GM12878 (cell line): ENCODE measurements at regions of chr1 and their contacts with region 1.

Region 1: DNA sequence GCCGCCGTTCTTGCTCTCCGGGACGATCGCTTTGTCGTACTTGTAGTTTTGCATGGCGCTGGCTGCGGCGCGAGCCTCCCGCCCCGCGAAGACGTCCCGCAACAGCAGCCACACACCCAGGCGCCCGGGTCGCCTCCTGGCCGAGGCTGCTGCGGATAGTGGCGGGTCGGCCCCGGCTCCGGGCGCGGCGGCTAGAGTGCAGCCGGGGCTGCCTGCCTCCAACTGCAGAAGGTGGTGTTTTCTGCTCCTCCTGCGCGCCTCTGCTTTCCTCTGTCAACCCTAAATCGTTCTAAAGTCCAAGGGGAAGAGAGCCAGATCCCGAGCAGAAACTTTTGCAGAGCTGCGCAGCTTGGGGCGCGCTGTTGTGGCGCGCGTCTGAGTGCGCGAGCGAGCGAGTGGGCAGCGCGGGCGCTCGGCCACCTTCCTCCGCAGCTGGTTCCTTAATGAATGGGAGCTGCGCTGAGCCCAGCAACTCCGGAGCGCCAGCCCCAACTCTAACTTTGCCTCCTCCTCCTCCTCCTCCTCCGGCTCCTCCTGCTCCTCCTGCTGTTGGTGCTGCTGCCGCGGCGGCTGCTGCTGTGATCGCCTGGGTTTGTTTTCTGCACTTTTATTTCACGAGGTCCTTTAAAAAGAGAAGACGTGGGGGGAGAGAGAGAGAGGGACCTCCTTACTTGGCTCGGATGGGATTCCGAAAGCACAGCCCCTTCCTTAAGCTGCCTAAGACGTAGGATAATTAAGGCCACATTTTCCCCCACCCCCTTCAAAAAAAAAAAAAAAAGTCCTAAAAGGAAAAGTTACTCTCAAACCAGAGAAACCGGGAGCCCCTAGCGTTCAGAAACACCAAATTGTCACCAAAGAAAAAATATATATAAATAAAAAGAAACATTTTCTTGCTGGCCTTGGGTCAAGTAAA is at the start of gene PLPP3:
- DNase-seq: no peak
- ATAC-seq: peak; percentile 59
- H3K4me3 ChIP-seq: peak within 1 kb of the TSS; percentile 72
- H3K27ac ChIP-seq: no peak within 1 kb of the TSS
- H3K4me1 ChIP-seq: no peaks in the 10 kb centered on the region
- H3K27me3 ChIP-seq: peaks cover 0 to 11% of the 10 kb centered on the region in 2 experiments; a peak in 2 of 4 replicates
- CTCF ChIP-seq: peak in 2 of 3 experiments; percentile 27 to 32; a peak in 4 of 6 replicates
- EP300 ChIP-seq: no peak
- POLR2A ChIP-seq: no peak
- RAD21 ChIP-seq: peak; percentile 53
- polyA plus RNA-seq, gene PLPP3: 7.4 to 8.0 TPM

Region 2: GRCh38 chr1:55284852-55285251 is 1294.4 kb before region 1 on chr1:
- CTCF ChIA-PET with region 1: interaction called, 96 read pairs
- POLR2A ChIA-PET with region 1: interaction called, 3 read pairs
- RAD21 ChIA-PET with region 1: interaction called, 43 read pairs
- SMC1A ChIA-PET with region 1: interaction called, 59 read pairs
- in situ Hi-C with region 1: loop called (anchors 5 kb)
- intact Hi-C with region 1: no loop called
- DNase-seq: peak; percentile 5
- ATAC-seq: no peak
- H3K4me3 ChIP-seq: no peak overlapping the region
- H3K27ac ChIP-seq: no peak overlapping the region
- H3K4me1 ChIP-seq: peaks cover 18% of the 10 kb centered on the region
- H3K27me3 ChIP-seq: no peaks in the 10 kb centered on the region; a peak in 1 of 4 replicates
- CTCF ChIP-seq: peak; percentile 43 to 53 (median 49); a peak in 5 of 6 replicates
- EP300 ChIP-seq: no peak
- POLR2A ChIP-seq: no peak
- RAD21 ChIP-seq: peak; percentile 81

Region 3: DNA sequence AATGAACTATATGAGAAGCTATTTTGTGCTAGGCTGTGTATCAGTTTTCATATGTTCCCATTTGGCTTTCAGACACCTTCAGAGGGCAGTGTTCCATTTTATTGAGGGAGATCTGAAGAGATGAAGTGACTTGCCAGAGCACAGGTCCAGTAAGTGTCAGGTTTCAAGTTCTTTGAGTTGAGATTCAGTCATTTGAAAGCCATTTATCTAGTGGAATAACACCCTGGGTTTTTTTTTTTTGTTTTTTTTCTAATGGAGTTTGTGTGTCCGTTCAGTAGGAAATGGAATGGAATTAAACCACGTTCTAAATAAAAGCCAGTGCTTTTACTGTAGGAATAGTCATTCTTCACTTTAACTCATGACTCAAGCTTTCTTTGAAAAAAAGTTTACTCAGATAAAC is 711.2 kb before region 1 on chr1:
- CTCF ChIA-PET with region 1: interaction called, 67 read pairs
- POLR2A ChIA-PET with region 1: no interaction called
- RAD21 ChIA-PET with region 1: interaction called, 29 read pairs
- SMC1A ChIA-PET with region 1: interaction called, 57 read pairs
- in situ Hi-C with region 1: loop called (anchors 10 kb)
- intact Hi-C with region 1: no loop called
- DNase-seq: no peak
- ATAC-seq: no peak
- H3K4me3 ChIP-seq: no peak overlapping the region
- H3K27ac ChIP-seq: no peak overlapping the region
- H3K4me1 ChIP-seq: no peaks in the 10 kb centered on the region
- H3K27me3 ChIP-seq: no peaks in the 10 kb centered on the region; a peak in 1 of 4 replicates
- CTCF ChIP-seq: no peak; a peak in 1 of 6 replicates
- EP300 ChIP-seq: no peak
- POLR2A ChIP-seq: no peak
- RAD21 ChIP-seq: no peak

Region 4: GRCh38 chr1:56330391-56331026 is 248.7 kb before region 1 on chr1:
- CTCF ChIA-PET with region 1: interaction called, 39 read pairs
- POLR2A ChIA-PET with region 1: interaction called, 44 read pairs
- RAD21 ChIA-PET with region 1: interaction called, 167 read pairs
- SMC1A ChIA-PET with region 1: interaction called, 114 read pairs
- in situ Hi-C with region 1: loop called (anchors 5 kb)
- intact Hi-C with region 1: loop called (anchors 2 kb)
- DNase-seq: peak; percentile 68
- ATAC-seq: peak; percentile 70
- H3K4me3 ChIP-seq: no peak overlapping the region
- H3K27ac ChIP-seq: no peak overlapping the region
- H3K4me1 ChIP-seq: no peaks in the 10 kb centered on the region; the same call in 1 of the 2 replicates
- H3K27me3 ChIP-seq: no peaks in the 10 kb centered on the region
- CTCF ChIP-seq: no peak
- EP300 ChIP-seq: peak; percentile 41 to 67; a peak in 2 of 4 replicates
- POLR2A ChIP-seq: no peak
- RAD21 ChIP-seq: no peak

Region 5: GRCh38 chr1:56477164-56478111 is 101.8 kb before region 1 on chr1:
- CTCF ChIA-PET with region 1: interaction called, 209 read pairs
- POLR2A ChIA-PET with region 1: interaction called, 13 read pairs
- RAD21 ChIA-PET with region 1: interaction called, 266 read pairs
- SMC1A ChIA-PET with region 1: interaction called, 348 read pairs
- in situ Hi-C with region 1: no loop called
- intact Hi-C with region 1: loop called (anchors 2 kb)
- DNase-seq: peak; percentile 17
- ATAC-seq: peak; percentile 75
- H3K4me3 ChIP-seq: no peak overlapping the region
- H3K27ac ChIP-seq: no peak overlapping the region
- H3K4me1 ChIP-seq: peaks cover 8% of the 10 kb centered on the region; the same call in 1 of the 2 replicates
- H3K27me3 ChIP-seq: peaks cover 0 to 5% of the 10 kb centered on the region in 2 experiments; a peak in 2 of 4 replicates
- CTCF ChIP-seq: no peak
- EP300 ChIP-seq: 0 out of 4 replicates have a peak, but pooled peaks of 1 of the 2 experiments have one; percentile 22
- POLR2A ChIP-seq: no peak
- RAD21 ChIP-seq: no peak

Region 6: GRCh38 chr1:56533621-56534020 is 45.6 kb before region 1 on chr1:
- CTCF ChIA-PET with region 1: interaction called, 116 read pairs
- POLR2A ChIA-PET with region 1: interaction called, 4 read pairs
- RAD21 ChIA-PET with region 1: interaction called, 174 read pairs
- SMC1A ChIA-PET with region 1: interaction called, 80 read pairs
- in situ Hi-C with region 1: no loop called
- intact Hi-C with region 1: no loop called
- DNase-seq: no peak
- ATAC-seq: peak; percentile 82
- H3K4me3 ChIP-seq: no peak overlapping the region
- H3K27ac ChIP-seq: no peak overlapping the region
- H3K4me1 ChIP-seq: peaks cover 2% of the 10 kb centered on the region; the same call in 1 of the 2 replicates
- H3K27me3 ChIP-seq: no peaks in the 10 kb centered on the region
- CTCF ChIP-seq: no peak
- EP300 ChIP-seq: no peak
- POLR2A ChIP-seq: no peak
- RAD21 ChIP-seq: no peak